Transverse colon (tissue), 4 donors: ENCODE measurements at regions of chr21 and their contacts with region 1.

Region 1: DNA sequence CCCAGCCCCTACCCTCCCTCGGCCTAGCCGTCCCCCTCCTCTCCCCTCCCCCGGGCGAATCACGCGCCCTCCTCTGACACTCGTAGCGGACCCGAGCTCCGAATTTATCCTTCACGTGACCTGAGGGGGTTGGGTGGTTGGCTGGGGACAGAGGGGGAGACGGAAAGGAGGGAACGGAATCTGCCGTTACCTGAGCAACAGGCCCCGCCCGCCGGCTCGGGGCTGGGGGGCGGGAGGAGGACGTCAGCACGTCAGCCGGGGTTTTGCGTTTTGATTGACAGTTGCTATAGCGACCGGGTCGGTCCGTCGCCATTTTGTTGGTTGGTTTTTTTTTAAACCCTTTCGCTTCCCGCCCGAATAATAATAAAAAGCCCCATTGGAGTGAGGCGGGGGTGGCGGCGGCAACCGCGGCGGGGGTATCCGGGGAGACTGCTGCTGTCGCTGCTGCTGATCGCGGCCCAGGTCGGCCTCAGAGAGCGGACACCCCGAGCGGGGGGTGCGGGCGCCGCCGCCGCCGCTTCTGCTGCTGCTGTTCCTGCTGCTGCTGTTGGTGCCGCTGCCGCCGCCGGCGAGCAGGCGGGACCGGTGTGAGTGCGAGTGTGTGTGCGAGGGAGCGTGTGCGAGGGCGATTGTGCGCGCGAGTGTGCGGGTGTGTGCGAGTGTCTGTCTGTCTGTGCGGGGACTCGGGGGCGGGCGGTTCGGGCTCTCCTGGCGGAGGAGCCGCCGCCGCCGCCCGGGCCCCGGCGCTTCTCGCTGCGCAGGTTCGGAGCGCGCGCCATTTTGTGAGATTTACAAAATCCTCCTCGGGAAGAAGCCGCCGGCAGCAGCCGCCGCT is at the start of gene DYRK1A:
- DNase-seq: peak; percentile 99
- H3K4me3 ChIP-seq: peak within 1 kb of the TSS; percentile 84 to 99 (median 96)
- H3K27ac ChIP-seq: peak within 1 kb of the TSS; percentile 96 to 100 (median 100)
- H3K4me1 ChIP-seq: peaks cover 9 to 43% (median 33%) of the 10 kb centered on the region in 4 donors
- H3K27me3 ChIP-seq: no peaks in the 10 kb centered on the region
- CTCF ChIP-seq: no peak
- EP300 ChIP-seq: peak; percentile 72
- POLR2A ChIP-seq: peak; percentile 92
- total RNA-seq, gene DYRK1A: 71.5 to 116 (median 90.9) TPM

Region 2: DNA sequence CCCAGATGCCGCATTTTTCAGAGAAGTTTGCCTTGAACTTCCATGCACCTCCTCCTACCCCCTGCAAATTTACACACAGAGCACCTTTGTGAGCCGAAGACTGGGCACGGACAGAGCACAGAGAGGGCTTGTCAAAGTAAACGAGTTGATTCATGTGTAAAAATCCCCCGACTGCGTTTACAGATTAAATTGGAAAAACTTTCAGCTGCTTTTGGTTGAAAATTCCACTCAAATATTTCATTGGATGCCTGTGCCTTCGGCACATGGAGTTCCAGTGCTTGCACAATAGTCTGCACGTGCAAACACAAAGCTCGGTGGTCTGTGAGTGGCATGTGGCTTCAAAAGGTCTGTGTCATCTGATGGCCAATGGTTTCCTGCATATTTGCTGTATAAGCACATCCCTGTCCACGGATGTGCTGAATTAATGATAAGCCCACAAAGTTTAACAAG is 1483.9 kb before region 1 on chr21:
- in situ Hi-C with region 1: no loop called
- intact Hi-C with region 1: no loop called
- DNase-seq: no peak
- H3K4me3 ChIP-seq: no peak overlapping the region
- H3K27ac ChIP-seq: no peak overlapping the region
- H3K4me1 ChIP-seq: no peaks in the 10 kb centered on the region
- H3K27me3 ChIP-seq: no peaks in the 10 kb centered on the region
- CTCF ChIP-seq: no peak
- EP300 ChIP-seq: no peak
- POLR2A ChIP-seq: no peak

Region 3: GRCh38 chr21:37257967-37258877 is 108.5 kb before region 1 on chr21:
- in situ Hi-C with region 1: loop called in 1 of 4 experiments (anchors 10 kb)
- intact Hi-C with region 1: no loop called
- DNase-seq: peak; percentile 58
- H3K4me3 ChIP-seq: peak overlapping the region; percentile 15 to 60 (median 40)
- H3K27ac ChIP-seq: peak overlapping the region; percentile 69 to 88 (median 74)
- H3K4me1 ChIP-seq: peaks cover 0 to 22% (median 19%) of the 10 kb centered on the region in 4 donors
- H3K27me3 ChIP-seq: no peaks in the 10 kb centered on the region
- CTCF ChIP-seq: no peak
- EP300 ChIP-seq: no peak
- POLR2A ChIP-seq: peak; percentile 40

Region 4: DNA sequence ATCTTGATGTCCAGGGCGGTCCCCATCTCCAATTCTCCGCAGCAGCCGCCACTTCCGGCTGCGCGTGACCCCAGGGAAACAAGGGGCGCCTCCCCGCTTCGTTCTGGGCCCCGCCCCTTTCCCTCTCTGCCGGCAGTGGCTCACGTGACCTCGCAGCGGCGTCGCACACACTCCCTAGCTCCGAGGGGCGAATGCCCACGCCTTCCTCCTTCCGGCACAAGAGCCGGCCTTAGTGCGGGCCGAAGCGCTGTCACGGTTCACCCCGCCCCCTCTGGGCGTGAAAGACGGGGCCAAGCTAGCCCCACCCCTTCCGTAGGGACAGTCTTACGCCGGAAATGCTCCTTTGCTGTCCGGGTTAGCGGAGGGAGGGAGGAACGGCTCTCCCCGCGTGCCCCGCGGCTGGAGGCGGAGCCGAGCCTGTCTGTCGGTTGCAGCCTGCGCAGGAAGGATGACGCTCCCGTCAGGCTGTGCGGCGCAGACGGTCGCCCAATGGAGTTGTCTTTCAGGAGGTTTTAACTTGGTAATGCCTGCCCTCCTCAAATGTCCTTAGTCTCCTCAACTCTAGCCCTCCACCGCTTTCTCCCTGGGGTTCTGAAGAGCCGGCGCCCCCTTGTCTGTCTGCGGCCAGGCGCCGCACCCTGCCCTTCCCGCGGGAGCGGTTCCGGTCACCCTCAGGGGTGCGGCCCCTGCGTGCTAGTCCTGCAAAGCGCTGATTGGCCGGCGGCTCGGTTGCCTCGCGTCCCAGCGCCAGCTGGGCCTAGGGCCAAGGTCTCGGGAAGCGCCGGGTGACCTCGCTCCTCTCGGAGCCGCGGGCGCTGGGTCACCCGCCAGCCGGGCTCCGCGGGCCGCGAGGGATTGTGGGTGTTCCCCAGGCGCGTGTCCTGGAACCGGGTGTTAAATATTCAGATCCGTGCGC is 99.2 kb before region 1 on chr21 and contains the start of gene VPS26C:
- in situ Hi-C with region 1: no loop called
- intact Hi-C with region 1: loop called (anchors 1 kb)
- DNase-seq: peak; percentile 99
- H3K4me3 ChIP-seq: peak within 1 kb of the TSS; percentile 74 to 83 (median 75)
- H3K27ac ChIP-seq: peak within 1 kb of the TSS; percentile 96 to 98 (median 98)
- H3K4me1 ChIP-seq: peaks cover 5 to 26% (median 11%) of the 10 kb centered on the region in 4 donors
- H3K27me3 ChIP-seq: no peaks in the 10 kb centered on the region
- CTCF ChIP-seq: peak in 1 of 5 experiments; percentile 9
- EP300 ChIP-seq: peak; percentile 47
- POLR2A ChIP-seq: peak; percentile 95
- total RNA-seq, gene VPS26C: 86.5 to 146 (median 108) TPM

Region 5: GRCh38 chr21:37563641-37564340 is 197.1 kb after region 1 on chr21:
- in situ Hi-C with region 1: no loop called
- intact Hi-C with region 1: loop called (anchors 10 kb)
- DNase-seq: peak; percentile 94
- H3K4me3 ChIP-seq: peak overlapping the region; percentile 67 to 92 (median 76)
- H3K27ac ChIP-seq: peak overlapping the region; percentile 91
- H3K4me1 ChIP-seq: peaks cover 5 to 22% (median 11%) of the 10 kb centered on the region in 4 donors
- H3K27me3 ChIP-seq: no peaks in the 10 kb centered on the region
- CTCF ChIP-seq: peak; percentile 26 to 57 (median 37)
- EP300 ChIP-seq: no peak
- POLR2A ChIP-seq: peak; percentile 66